ENCODE measurements at regions of chr1 and their contacts with region 1.

Region 1: DNA sequence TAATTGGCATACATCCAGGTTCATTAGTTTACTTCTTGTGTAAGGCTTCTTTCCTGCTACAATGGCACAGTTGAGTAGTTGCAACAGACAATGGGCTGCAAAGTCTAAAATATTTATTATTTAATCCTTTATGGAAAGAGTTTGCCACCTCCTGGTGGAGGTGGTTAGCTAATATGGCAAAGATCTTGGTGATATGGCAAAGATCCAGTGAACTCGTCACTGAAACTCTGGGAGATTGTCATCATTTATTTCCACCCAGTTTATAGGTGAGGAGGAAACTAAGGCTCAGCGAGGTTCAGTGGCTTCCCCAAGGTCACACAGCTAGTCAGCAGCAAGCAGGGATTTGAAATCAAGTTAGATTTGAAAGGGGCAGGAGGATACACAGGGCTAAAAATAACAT is 16.1 kb upstream of the IFFO2 start:
- DNase-seq: peak; percentile 82
- ATAC-seq: peak; percentile 38
- H3K4me3 ChIP-seq: no peak overlapping the region
- H3K27ac ChIP-seq: no peak overlapping the region
- H3K4me1 ChIP-seq: peaks cover 22% of the 10 kb centered on the region
- H3K27me3 ChIP-seq: no peaks in the 10 kb centered on the region
- CTCF ChIP-seq: peak; percentile 54

Region 2: GRCh38 chr1:18913065-18913835 is 59.3 kb before region 1 on chr1:
- CTCF ChIA-PET with region 1: interaction called, 7 read pairs
- POLR2A ChIA-PET with region 1: no interaction called
- intact Hi-C with region 1: loop called (anchors 2 kb)
- DNase-seq: peak; percentile 77
- ATAC-seq: peak; percentile 89
- H3K4me3 ChIP-seq: no peak overlapping the region
- H3K27ac ChIP-seq: no peak overlapping the region
- H3K4me1 ChIP-seq: peaks cover 5% of the 10 kb centered on the region
- H3K27me3 ChIP-seq: no peaks in the 10 kb centered on the region
- CTCF ChIP-seq: peak; percentile 100

Region 3: GRCh38 chr1:19096036-19096833 is 123.7 kb after region 1 on chr1:
- CTCF ChIA-PET with region 1: no interaction called
- POLR2A ChIA-PET with region 1: no interaction called
- intact Hi-C with region 1: loop called (anchors 5 kb)
- DNase-seq: peak; percentile 74
- ATAC-seq: peak; percentile 97
- H3K4me3 ChIP-seq: no peak overlapping the region
- H3K27ac ChIP-seq: no peak overlapping the region
- H3K4me1 ChIP-seq: no peaks in the 10 kb centered on the region
- H3K27me3 ChIP-seq: no peaks in the 10 kb centered on the region
- CTCF ChIP-seq: peak; percentile 82